ENCODE measurements at regions of chr11 and their contacts with region 1.

Region 1: DNA sequence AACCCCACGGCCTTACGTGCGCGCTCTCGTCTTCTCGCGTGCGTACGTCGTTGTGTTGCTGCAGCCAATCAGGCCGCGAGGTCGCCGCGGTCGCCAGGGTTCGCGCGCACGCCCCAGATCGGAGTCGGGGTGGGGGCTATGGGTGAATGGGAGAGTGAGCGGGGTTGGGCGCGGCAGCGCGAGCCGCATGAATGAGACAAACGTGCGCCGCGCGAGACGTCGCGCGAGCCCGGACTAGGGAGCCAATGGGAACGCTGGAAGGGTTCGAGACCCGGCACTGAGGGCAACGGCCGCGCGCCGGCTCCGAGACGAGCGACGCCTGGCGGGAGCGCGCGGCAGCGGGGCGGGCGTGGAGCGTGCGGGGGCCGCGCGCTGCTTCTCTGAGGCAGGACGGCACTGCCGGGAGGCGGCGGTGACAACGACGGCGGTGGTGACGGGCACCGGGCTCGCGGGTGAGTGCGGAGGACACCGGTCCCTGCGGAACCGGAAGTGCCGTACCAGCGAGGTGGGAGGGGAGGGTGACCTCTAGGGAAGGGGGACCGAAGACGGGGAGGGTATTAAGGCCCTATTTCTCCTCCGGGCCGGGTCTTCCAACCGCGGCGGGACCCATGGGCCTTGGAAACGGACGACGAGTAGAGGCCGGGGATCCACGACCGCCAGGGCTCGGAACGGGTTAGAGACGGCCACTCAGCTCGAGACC is at the start of gene ZDHHC5:
- DNase-seq: peak; percentile 99
- H3K4me3 Mint-ChIP-seq: peak within 1 kb of the TSS; percentile 91
- H3K27ac Mint-ChIP-seq: peak within 1 kb of the TSS; percentile 97
- H3K4me1 Mint-ChIP-seq: peaks cover 43% of the 10 kb centered on the region
- H3K27me3 Mint-ChIP-seq: no peaks in the 10 kb centered on the region
- total RNA-seq, gene ZDHHC5: 38.5 to 46.6 TPM

Region 2: DNA sequence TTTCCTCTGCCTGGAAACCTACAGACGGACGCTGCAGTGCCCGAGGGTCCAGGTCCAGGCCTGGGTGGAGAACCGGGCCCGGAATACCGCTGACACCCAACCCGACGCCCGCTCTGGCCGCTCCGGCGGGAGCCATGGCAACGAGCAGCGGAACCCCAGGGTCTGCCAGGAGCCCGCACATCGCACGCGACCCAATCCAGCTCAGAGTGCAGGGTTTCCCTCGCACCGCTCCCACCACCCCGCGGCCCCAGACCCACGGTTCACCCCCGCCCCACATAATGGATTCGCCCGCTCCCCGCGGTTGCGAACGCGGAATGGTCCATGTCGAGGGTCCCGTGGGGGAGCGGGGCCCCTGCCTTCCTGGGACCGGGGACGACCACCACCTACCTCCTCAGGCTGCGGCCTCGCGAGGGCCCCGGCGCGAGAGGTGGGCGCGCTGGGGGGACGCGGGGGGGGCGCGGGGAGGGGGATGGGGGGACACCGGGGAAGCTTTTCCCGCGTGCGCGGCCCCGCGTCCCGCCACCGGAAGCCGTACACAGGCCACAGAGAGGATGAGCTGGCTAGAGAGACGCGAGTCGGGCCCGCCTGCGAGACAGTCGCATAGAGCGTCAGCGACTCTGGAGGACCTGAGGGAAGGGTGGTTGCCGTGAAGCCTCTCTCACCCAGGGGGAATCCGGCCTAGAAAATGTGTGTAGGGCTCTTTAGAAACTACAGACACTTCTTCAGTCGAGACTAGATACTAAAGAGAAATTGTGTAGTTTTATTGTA is 332.4 kb before region 1 on chr11 and contains the start of gene SSRP1:
- CTCF ChIA-PET with region 1: no interaction called
- intact Hi-C with region 1: loop called (anchors 1 kb)
- DNase-seq: peak; percentile 93
- H3K4me3 Mint-ChIP-seq: peak within 1 kb of the TSS; percentile 91
- H3K27ac Mint-ChIP-seq: peak within 1 kb of the TSS; percentile 99
- H3K4me1 Mint-ChIP-seq: peaks cover 41% of the 10 kb centered on the region
- H3K27me3 Mint-ChIP-seq: no peaks in the 10 kb centered on the region
- total RNA-seq, gene SSRP1: 304 to 322 TPM

Region 3: DNA sequence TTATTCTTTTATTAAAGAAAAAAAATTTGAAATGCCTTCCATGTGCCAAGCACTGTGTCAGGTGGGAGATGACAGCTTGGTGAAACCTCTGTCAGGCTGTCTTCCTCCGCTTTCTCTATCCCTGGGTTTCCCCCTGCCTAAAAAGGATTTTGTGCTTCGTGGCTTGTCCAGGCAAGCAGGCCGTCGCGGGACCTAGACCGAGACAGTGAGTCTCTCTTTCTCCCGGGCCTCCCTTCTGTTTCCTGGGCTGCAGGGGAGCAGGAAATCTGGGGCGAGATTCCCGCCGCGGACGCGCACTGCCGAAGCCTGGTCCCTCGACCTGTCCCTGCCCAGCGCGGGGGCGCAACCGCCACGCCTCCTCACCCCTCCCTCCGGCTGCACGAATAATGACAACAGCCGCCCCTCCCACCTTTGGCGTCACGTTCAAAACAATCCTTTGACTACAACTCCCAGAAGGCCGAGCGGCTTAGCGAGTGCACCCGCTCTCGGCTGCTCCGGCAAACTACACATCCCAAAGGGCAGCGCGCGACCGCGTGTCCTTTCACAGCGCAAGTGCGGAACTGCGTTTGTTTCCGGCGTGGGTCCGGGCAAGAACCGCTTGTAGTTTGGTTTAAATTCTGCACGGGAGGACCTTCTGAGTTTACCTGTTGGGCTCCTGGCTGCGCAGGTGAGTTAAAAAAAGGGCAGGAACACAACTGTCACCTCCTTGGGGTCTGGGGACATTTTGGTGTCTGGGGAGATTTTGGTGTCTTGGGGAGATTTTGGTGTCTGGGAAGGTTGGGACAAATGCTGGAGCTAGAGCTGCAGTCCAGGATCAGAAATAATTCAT is 10.5 kb before region 1 on chr11 and contains the start of gene CLP1:
- CTCF ChIA-PET with region 1: interaction called, 3 read pairs
- intact Hi-C with region 1: loop called (anchors 1 kb)
- DNase-seq: peak; percentile 100
- H3K4me3 Mint-ChIP-seq: peak within 1 kb of the TSS; percentile 92
- H3K27ac Mint-ChIP-seq: peak within 1 kb of the TSS; percentile 90
- H3K4me1 Mint-ChIP-seq: peaks cover 34% of the 10 kb centered on the region
- H3K27me3 Mint-ChIP-seq: no peaks in the 10 kb centered on the region
- total RNA-seq, gene CLP1: 11.3 to 14.2 TPM

Region 4: GRCh38 chr11:57680552-57680874 is 12.6 kb after region 1 on chr11:
- CTCF ChIA-PET with region 1: no interaction called
- intact Hi-C with region 1: loop called (anchors 1 kb)
- DNase-seq: peak; percentile 10
- H3K4me3 Mint-ChIP-seq: peak overlapping the region; percentile 6
- H3K27ac Mint-ChIP-seq: peak overlapping the region; percentile 80
- H3K4me1 Mint-ChIP-seq: peaks cover 52% of the 10 kb centered on the region
- H3K27me3 Mint-ChIP-seq: no peaks in the 10 kb centered on the region

Region 5: DNA sequence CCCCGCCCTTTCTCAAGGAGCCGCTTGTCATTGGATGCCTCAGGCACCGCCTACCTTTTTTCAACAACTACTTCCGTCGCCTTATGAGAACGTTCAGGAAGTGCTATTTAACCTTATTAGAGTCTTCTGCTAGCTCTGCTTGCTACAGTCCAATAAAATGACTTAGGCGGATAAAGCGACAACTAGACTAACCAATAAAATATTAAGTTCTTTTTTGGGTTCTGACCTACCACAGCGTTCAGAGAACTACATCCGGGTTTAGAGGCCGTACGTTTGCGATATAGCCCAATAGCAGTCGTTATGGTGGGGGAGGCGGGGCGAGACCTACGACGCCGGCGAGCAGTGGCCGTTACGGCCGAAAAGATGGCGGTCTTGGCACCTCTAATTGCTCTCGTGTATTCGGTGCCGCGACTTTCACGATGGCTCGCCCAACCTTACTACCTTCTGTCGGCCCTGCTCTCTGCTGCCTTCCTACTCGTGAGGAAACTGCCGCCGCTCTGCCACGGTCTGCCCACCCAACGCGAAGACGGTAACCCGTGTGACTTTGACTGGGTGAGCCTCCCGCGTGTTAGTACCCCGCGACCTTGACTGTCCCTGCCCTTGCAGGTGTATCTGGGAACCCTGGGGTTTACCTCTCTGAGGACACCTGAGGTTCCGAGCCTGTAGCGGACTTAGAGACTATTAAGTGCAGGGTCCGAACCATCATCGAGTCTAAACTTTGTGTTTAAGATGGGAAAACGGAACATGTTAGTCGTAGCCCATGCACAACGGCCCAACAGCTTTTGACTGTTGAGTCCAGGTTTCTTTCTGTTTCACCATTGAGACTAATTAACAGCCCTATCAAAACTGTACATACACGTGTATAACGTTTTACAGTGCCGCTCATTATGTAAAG is 44.6 kb after region 1 on chr11 and contains the start of gene TMX2:
- CTCF ChIA-PET with region 1: interaction called, 4 read pairs
- intact Hi-C with region 1: loop called (anchors 1 kb)
- DNase-seq: peak; percentile 95
- H3K4me3 Mint-ChIP-seq: peak within 1 kb of the TSS; percentile 99
- H3K27ac Mint-ChIP-seq: peak within 1 kb of the TSS; percentile 92
- H3K4me1 Mint-ChIP-seq: peaks cover 50% of the 10 kb centered on the region
- H3K27me3 Mint-ChIP-seq: no peaks in the 10 kb centered on the region
- total RNA-seq, gene TMX2: 49.8 to 54.7 TPM

Region 6: DNA sequence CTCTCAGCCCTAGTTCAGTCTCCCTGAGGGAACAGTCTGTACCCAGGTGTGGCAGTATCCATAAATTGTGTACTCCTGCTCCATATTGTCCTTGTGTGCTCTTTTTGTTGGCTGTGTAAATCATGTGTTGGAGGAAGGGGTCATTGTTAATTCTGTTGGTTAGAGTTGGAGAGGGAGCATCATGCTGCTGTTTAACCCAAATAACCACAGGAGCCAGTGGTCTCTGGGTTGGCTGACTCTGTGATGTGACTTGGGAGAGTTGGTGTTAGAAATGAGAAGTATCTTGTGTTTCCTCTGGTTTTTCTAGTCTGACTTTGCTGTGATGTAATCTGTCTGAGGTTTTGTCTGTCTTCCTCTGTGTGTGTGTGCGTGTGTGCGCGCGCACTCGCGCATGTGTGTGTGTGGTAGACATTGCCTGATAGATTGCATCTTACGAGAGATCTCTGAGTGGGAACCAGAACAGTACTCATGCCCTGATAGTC is 124.2 kb after region 1 on chr11:
- CTCF ChIA-PET with region 1: no interaction called
- intact Hi-C with region 1: loop called (anchors 1 kb)
- DNase-seq: peak; percentile 87
- H3K4me3 Mint-ChIP-seq: peak overlapping the region; percentile 59
- H3K27ac Mint-ChIP-seq: peak overlapping the region; percentile 94
- H3K4me1 Mint-ChIP-seq: peaks cover 34% of the 10 kb centered on the region
- H3K27me3 Mint-ChIP-seq: no peaks in the 10 kb centered on the region

Region 7: GRCh38 chr11:59142530-59143507 is 1474.9 kb after region 1 on chr11 and contains the start of gene FAM111A:
- CTCF ChIA-PET with region 1: no interaction called
- intact Hi-C with region 1: loop called (anchors 5 kb)
- DNase-seq: peak; percentile 88
- H3K4me3 Mint-ChIP-seq: peak within 1 kb of the TSS; percentile 95
- H3K27ac Mint-ChIP-seq: peak within 1 kb of the TSS; percentile 91
- H3K4me1 Mint-ChIP-seq: peaks cover 40% of the 10 kb centered on the region
- H3K27me3 Mint-ChIP-seq: no peaks in the 10 kb centered on the region
- total RNA-seq, gene FAM111A: 98.3 to 99.4 TPM